ENCODE measurements at regions of chr18 and their contacts with region 1.

Region 1: GRCh38 chr18:11995445-11996189 is 14.3 kb downstream of the IMPA2 start:
- DNase-seq: peak; percentile 82
- H3K4me3 ChIP-seq: no peak overlapping the region
- H3K27ac ChIP-seq: no peak overlapping the region
- H3K4me1 ChIP-seq: peaks cover 6% of the 10 kb centered on the region
- H3K27me3 ChIP-seq: no peaks in the 10 kb centered on the region
- CTCF ChIP-seq: peak; percentile 78 to 80
- POLR2A ChIP-seq: no peak

Region 2: DNA sequence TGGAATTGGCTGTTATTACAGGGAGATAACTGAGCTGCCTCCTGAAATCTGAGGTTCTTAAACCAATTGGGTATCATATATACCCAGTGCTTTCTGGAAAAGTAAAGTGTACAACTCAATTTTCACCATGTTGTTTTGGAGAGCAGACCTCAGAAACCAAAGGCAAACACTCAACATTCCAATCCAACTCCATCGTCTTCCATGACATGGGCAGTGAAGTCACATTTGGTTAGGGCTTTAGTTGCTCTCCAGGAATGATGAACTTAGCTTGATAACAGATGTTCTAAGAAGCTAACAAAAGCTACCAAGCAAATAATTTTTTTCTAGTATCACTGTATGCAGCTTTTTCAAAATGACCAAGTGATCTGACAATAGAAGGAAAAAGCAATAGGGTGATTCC is 493.2 kb before region 1 on chr18:
- CTCF ChIA-PET with region 1: no interaction called
- POLR2A ChIA-PET with region 1: no interaction called
- dilution Hi-C with region 1: no loop called
- intact Hi-C with region 1: no loop called
- DNase-seq: no peak
- H3K4me3 ChIP-seq: no peak overlapping the region
- H3K27ac ChIP-seq: no peak overlapping the region
- H3K4me1 ChIP-seq: peaks cover 26% of the 10 kb centered on the region
- H3K27me3 ChIP-seq: no peaks in the 10 kb centered on the region
- CTCF ChIP-seq: no peak
- POLR2A ChIP-seq: no peak

Region 3: GRCh38 chr18:11733031-11733430 is 262.6 kb before region 1 on chr18:
- CTCF ChIA-PET with region 1: interaction called, 102 read pairs
- POLR2A ChIA-PET with region 1: interaction called, 9 read pairs
- dilution Hi-C with region 1: no loop called
- intact Hi-C with region 1: loop called (anchors 1 kb)
- DNase-seq: peak; percentile 60
- H3K4me3 ChIP-seq: no peak overlapping the region
- H3K27ac ChIP-seq: no peak overlapping the region
- H3K4me1 ChIP-seq: no peaks in the 10 kb centered on the region
- H3K27me3 ChIP-seq: peaks cover 0 to 2% of the 10 kb centered on the region in 2 experiments
- CTCF ChIP-seq: peak; percentile 86 to 96
- POLR2A ChIP-seq: no peak

Region 4: GRCh38 chr18:11925800-11926481 is 69.7 kb before region 1 on chr18:
- CTCF ChIA-PET with region 1: interaction called, 717 read pairs
- POLR2A ChIA-PET with region 1: no interaction called
- dilution Hi-C with region 1: no loop called
- intact Hi-C with region 1: no loop called
- DNase-seq: no peak
- H3K4me3 ChIP-seq: no peak overlapping the region
- H3K27ac ChIP-seq: no peak overlapping the region
- H3K4me1 ChIP-seq: no peaks in the 10 kb centered on the region
- H3K27me3 ChIP-seq: peaks cover 0 to 4% of the 10 kb centered on the region in 2 experiments
- CTCF ChIP-seq: no peak
- POLR2A ChIP-seq: no peak

Region 5: GRCh38 chr18:11955239-11956029 is 40.2 kb before region 1 on chr18:
- CTCF ChIA-PET with region 1: interaction called, 17 read pairs
- POLR2A ChIA-PET with region 1: no interaction called
- dilution Hi-C with region 1: no loop called
- intact Hi-C with region 1: no loop called
- DNase-seq: peak; percentile 87
- H3K4me3 ChIP-seq: no peak overlapping the region
- H3K27ac ChIP-seq: peak overlapping the region; percentile 57
- H3K4me1 ChIP-seq: peaks cover 4% of the 10 kb centered on the region
- H3K27me3 ChIP-seq: no peaks in the 10 kb centered on the region
- CTCF ChIP-seq: no peak
- POLR2A ChIP-seq: no peak

Region 6: DNA sequence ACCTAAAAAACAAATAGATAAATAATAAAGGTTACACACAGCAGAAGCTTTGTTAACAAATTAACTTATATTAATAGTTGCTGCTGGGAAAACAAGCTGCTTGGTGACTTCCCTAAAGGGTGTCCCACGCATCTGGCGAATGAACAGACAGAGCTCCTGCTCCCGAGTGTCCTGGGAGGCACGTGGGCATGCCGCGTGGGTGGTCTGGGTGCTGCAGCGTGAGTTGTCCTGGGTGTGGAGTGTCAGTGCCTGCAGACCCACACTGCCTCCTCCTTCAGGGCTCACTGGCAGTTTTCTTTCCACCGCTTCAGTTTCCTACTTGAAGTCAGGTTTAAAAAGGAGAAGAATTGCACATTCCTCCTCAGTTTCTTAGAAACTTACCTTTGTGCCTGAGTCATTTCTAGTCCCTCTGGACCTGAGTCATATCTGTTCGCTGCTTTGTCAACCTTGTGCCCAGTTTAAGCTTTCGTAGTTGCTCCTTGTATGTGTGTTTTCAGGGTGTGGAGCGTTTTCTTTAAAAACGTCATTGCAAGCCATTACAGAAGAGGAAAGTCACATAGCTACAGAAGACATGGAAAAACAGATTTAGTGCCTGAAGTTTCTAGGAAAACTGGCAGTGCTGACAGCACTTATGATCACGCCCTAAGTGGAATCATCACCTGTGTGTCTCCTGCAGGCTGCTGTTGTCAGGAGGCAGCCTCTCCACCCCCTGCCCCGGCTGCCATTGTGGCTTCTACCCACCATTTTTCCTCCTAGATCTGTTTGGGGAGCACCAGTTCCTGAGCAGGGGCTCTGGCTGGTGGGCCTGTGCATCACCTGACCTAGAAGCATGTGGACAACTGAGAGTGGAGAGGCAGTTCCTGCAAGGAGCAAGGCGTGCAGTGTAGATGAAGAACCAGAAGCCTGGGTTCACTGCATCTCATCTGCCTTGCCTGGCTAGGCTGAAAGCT is 10.2 kb after region 1 on chr18:
- CTCF ChIA-PET with region 1: interaction called, 37 read pairs
- POLR2A ChIA-PET with region 1: no interaction called
- dilution Hi-C with region 1: no loop called
- intact Hi-C with region 1: no loop called
- DNase-seq: no peak
- H3K4me3 ChIP-seq: no peak overlapping the region
- H3K27ac ChIP-seq: no peak overlapping the region
- H3K4me1 ChIP-seq: no peaks in the 10 kb centered on the region
- H3K27me3 ChIP-seq: no peaks in the 10 kb centered on the region
- CTCF ChIP-seq: no peak
- POLR2A ChIP-seq: no peak

Region 7: DNA sequence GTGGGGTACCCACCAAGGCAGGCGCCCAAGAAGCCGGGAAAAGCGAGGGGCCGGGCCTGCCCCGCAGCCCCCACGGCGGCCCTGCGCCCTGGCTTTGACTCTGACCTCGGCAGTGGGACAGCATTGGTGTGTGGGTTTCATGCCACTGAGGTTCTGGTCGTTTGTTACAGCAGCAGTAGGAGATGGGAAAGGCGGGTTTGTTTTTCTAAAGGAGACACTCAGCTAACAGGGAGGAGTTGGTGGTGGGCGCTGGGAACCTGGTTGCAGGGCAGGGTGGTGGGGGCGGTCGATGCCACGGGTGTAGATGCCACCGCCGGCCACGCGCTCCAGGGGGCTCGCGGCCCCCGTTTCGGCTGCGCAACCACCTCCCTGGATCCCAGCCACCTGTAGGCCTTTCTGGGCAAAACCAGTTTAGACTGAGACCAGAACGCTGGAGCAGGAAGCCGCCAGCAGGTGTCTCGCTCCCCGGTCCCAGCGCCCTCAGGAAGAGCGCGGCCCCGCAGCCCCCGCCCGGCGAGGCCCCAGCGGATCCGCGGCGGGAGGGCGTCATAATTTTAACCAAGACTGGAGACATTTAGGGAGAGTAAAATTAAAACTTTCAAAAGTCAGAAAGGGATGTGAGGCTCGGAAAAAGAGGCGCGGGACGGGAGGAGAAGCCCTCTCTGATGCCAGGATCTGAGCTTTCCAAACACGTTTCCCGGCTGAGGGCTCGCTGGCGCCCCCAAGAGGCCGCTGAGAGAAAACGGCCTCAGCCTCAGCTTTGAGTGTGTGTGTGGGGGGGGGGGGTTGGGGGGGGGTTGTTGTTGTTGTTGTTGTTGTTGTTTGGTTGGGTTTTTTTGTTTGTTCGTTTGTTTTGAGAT is 276.0 kb after region 1 on chr18:
- CTCF ChIA-PET with region 1: no interaction called
- POLR2A ChIA-PET with region 1: no interaction called
- dilution Hi-C with region 1: no loop called
- intact Hi-C with region 1: no loop called
- DNase-seq: peak; percentile 85
- H3K4me3 ChIP-seq: peak overlapping the region; percentile 36 to 63 (median 45)
- H3K27ac ChIP-seq: peak overlapping the region; percentile 50
- H3K4me1 ChIP-seq: no peaks in the 10 kb centered on the region
- H3K27me3 ChIP-seq: no peaks in the 10 kb centered on the region
- CTCF ChIP-seq: peak; percentile 60 to 73
- POLR2A ChIP-seq: no peak

Region 8: GRCh38 chr18:12394428-12394827 is 398.8 kb after region 1 on chr18:
- CTCF ChIA-PET with region 1: no interaction called
- POLR2A ChIA-PET with region 1: no interaction called
- dilution Hi-C with region 1: no loop called
- intact Hi-C with region 1: no loop called
- DNase-seq: peak; percentile 26
- H3K4me3 ChIP-seq: no peak overlapping the region
- H3K27ac ChIP-seq: no peak overlapping the region
- H3K4me1 ChIP-seq: no peaks in the 10 kb centered on the region
- H3K27me3 ChIP-seq: no peaks in the 10 kb centered on the region
- CTCF ChIP-seq: peak; percentile 29 to 67
- POLR2A ChIP-seq: no peak